Activated CD4-positive, alpha-beta T cell treated with anti-CD3 and anti-CD28 coated beads for 36 hours (primary cell): ENCODE measurements at regions of chr3 and their contacts with region 1.

Region 1: DNA sequence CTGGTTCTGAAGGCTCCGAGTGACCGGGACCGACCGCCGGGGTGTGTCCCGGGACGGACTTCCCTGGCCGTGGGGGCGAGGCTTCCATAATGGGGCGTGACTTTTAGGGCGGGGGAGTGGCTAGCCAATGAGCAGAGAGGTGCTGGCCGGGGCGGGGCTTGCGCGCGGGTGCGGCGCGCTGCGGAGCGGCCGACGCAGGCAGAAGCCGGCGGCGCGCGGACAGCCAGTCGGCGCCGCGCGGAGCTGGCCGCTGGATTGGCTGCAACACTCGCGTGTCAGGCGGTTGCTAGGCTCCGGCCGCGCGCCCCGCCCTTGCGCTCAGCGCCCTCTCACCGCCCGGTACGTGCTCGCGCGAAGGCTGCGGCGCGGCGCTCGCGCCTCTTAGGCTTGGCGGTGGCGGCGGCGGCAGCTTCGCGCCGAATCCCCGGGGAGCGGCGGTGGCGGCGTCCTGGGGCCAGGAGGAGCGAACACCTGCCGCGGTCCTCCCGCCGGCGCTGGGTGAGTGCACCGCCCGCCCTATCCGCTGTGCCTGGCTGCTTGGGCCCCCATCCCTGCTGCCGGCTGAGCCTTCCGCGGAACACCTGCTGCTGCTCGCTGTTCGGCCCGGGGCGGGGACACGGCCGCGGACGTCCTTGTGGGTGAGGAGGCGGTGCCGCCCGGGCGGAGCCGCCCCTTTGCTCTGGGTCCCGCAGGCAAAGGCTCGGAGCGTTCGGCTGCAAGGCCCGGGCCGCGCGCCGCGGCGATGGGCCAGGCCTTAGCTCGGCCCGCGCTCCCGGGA is at the start of gene DAG1:
- DNase-seq: peak; percentile 98
- ATAC-seq: peak; percentile 92
- H3K4me3 Mint-ChIP-seq: peak within 1 kb of the TSS; percentile 81
- H3K27ac Mint-ChIP-seq: peak within 1 kb of the TSS; percentile 92
- H3K4me1 Mint-ChIP-seq: peaks cover 20% of the 10 kb centered on the region
- H3K27me3 Mint-ChIP-seq: no peaks in the 10 kb centered on the region
- total RNA-seq, gene DAG1: 9.0 to 9.2 TPM

Region 2: GRCh38 chr3:48088749-48089466 is 1381.2 kb before region 1 on chr3:
- CTCF ChIA-PET with region 1: no interaction called
- POLR2A ChIA-PET with region 1: no interaction called
- intact Hi-C with region 1: loop called in 1 of 2 experiments (anchors 2 kb)
- DNase-seq: peak; percentile 97
- ATAC-seq: peak; percentile 96
- H3K4me3 Mint-ChIP-seq: peak overlapping the region; percentile 97
- H3K27ac Mint-ChIP-seq: peak overlapping the region; percentile 93
- H3K4me1 Mint-ChIP-seq: peaks cover 29% of the 10 kb centered on the region
- H3K27me3 Mint-ChIP-seq: no peaks in the 10 kb centered on the region

Region 3: GRCh38 chr3:49007068-49007770 is 462.9 kb before region 1 on chr3 and contains the start of gene WDR6:
- CTCF ChIA-PET with region 1: no interaction called
- POLR2A ChIA-PET with region 1: interaction called, 3 read pairs
- intact Hi-C with region 1: loop called in 1 of 2 experiments (anchors 1 kb)
- DNase-seq: peak; percentile 99
- ATAC-seq: peak; percentile 90
- H3K4me3 Mint-ChIP-seq: peak within 1 kb of the TSS; percentile 100
- H3K27ac Mint-ChIP-seq: peak within 1 kb of the TSS; percentile 100
- H3K4me1 Mint-ChIP-seq: peaks cover 16% of the 10 kb centered on the region
- H3K27me3 Mint-ChIP-seq: no peaks in the 10 kb centered on the region
- total RNA-seq, gene WDR6: 109 to 127 TPM

Region 4: DNA sequence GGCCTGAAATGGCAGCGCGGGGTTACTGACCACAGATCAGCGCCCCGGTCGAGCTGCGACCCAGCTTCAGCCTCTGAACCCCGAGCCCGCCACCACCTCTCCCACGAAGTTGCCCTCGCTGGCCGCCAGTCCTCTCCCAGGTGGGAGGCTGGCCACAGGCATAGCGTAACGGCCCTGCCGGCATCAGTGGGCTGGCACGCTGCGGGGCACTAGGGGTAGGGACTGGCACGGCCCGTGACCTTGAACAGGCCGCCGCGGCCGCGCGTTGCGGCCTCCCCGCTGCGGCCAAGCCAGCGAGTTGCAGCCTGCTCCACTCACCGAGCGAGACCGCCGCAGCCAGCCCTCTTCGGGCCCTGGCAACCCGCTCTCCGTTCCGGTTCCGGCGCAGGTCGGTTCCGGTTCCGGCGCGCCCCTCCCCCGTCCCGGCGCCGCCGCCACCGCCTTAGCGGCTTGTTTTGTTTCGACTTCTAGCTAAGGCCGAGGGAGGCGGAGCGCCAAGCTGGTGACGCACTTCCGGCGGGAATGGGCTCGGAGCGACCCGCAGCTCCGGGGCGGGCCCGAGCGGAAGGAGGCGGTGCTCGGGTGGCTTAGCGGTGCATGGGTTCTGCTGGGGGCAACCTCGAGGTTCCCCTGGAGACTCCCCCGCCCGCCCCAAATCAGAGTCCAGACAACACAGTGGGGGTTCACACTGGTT is 349.5 kb before region 1 on chr3 and contains the start of gene USP19:
- CTCF ChIA-PET with region 1: no interaction called
- POLR2A ChIA-PET with region 1: no interaction called
- intact Hi-C with region 1: loop called in 1 of 2 experiments (anchors 1 kb)
- DNase-seq: peak; percentile 97
- ATAC-seq: peak; percentile 97
- H3K4me3 Mint-ChIP-seq: peak within 1 kb of the TSS; percentile 87
- H3K27ac Mint-ChIP-seq: peak within 1 kb of the TSS; percentile 88
- H3K4me1 Mint-ChIP-seq: peaks cover 19% of the 10 kb centered on the region
- H3K27me3 Mint-ChIP-seq: no peaks in the 10 kb centered on the region
- total RNA-seq, gene USP19: 45.2 to 45.9 TPM

Region 5: DNA sequence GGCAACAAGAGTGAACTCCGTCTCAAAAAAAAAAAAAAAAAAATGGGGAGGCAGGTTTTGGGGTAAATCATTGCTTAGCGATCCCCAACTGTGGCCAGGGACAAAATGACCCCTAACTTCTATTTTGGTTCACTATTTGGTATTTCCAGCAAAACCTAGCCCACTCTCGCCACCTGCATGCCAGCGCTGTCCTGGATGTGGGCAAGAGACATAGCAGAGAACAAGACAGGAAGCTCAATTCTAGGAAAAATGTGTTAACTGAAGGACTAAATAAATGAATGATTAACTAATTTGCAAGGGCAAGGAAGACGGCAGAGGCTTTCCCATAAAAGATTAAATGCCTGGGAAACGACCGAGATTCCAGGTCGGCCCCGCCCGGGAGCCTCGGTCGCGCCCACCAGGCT is 41.4 kb before region 1 on chr3:
- CTCF ChIA-PET with region 1: no interaction called
- POLR2A ChIA-PET with region 1: interaction called, 7 read pairs
- intact Hi-C with region 1: loop called in 1 of 2 experiments (anchors 1 kb)
- DNase-seq: no peak
- ATAC-seq: peak; percentile 2
- H3K4me3 Mint-ChIP-seq: peak overlapping the region; percentile 84
- H3K27ac Mint-ChIP-seq: peak overlapping the region; percentile 93
- H3K4me1 Mint-ChIP-seq: peaks cover 16% of the 10 kb centered on the region
- H3K27me3 Mint-ChIP-seq: no peaks in the 10 kb centered on the region

Region 6: DNA sequence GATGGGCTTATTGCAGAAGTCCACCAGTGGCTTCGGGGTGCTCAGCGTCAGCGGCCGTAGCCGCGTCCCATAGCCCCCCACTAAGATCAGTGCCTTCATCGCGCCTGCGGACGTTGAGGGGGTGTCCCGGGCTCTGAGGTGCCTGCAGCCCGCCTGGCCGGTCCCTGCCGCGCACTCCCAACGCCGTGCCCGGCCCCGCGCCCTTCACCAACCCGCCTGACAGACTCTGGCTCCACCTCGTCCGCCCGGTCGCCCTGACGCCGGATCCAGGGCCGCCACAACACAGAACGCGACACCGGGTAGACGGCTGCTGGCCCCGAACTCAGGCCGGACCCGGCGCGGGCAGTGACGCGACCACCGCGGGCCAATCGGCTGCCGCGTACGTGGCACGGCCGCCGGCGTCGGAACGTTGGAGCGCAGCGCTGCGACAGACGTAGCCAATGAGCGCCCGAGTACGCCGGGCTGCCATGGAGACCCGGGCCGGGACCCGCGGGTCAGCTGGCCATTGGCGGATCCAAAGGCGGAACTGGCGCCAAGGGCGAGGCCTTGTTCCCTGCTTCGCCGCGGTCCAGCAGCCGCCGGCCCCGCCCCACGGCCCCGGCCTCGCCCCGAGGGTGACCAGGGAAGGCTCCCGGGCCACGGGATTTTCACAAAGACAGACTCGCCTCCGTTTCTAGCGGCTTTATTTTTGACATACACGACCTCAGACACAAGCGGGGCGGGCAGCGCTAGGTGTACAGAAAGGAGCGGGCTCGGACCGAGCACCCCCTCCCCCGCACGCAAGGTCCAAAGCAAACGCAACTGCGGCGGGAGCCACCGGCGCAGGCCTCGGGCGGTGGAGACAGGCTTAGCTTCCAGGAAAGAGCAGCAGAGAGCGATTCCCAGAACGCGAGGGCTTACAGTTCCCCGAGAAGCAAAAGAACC is 253.8 kb after region 1 on chr3 and contains the start of gene GMPPB:
- CTCF ChIA-PET with region 1: interaction called, 3 read pairs
- POLR2A ChIA-PET with region 1: no interaction called
- intact Hi-C with region 1: loop called in 1 of 2 experiments (anchors 1 kb)
- DNase-seq: peak; percentile 97
- ATAC-seq: peak; percentile 87
- H3K4me3 Mint-ChIP-seq: peak within 1 kb of the TSS; percentile 92
- H3K27ac Mint-ChIP-seq: peak within 1 kb of the TSS; percentile 96
- H3K4me1 Mint-ChIP-seq: peaks cover 22% of the 10 kb centered on the region
- H3K27me3 Mint-ChIP-seq: no peaks in the 10 kb centered on the region
- total RNA-seq, gene GMPPB: 21.0 to 32.1 TPM

Region 7: GRCh38 chr3:50235716-50236496 is 765.8 kb after region 1 on chr3 and contains the start of gene GNAI2:
- CTCF ChIA-PET with region 1: no interaction called
- POLR2A ChIA-PET with region 1: no interaction called
- intact Hi-C with region 1: loop called in 1 of 2 experiments (anchors 5 kb)
- DNase-seq: peak; percentile 99
- ATAC-seq: peak; percentile 92
- H3K4me3 Mint-ChIP-seq: peak within 1 kb of the TSS; percentile 90
- H3K27ac Mint-ChIP-seq: peak within 1 kb of the TSS; percentile 96
- H3K4me1 Mint-ChIP-seq: peaks cover 31% of the 10 kb centered on the region
- H3K27me3 Mint-ChIP-seq: no peaks in the 10 kb centered on the region
- total RNA-seq, gene GNAI2: 280 to 341 TPM